ENCODE measurements at regions of chr14 and their contacts with region 1.

Region 1: DNA sequence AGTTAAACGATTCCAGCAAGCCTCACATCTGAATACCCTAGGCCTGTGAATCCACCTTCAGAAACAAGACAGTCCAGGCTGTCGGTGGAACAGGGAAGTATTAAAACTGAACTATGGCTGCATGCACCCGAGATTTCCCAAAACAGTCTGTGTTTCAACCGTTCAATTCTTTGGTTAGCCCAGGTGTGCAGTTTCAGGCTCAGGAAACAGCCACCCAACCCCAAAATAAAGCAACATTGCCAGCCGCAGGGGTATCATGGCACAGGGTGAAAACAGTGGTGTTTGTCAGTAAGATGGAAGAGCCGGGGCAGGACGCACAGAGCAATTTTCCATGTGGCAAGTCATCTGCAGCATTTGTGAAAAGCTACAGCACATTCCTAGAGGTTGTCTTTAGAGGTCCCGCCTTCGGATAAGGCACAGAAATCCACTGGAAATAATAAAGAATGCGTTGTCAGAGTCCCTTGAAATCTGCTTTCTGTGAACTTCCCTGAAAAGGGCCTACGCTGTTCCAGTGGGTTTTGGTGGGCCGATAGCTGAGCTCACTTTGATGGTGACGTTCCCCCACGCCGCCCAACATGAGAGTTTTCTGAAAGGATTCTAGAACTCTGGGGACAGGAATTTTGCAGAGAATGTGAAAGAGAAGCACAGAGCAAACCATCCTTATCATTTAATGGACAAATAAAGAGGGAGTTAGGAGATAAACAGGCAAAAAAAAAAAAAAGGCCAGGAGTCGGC is 84.9 kb downstream of the BCL11B start:
- DNase-seq: peak in 1 of 35 experiments; percentile 40
- ATAC-seq: no peak
- H3K4me3 ChIP-seq: peak overlapping the region in 1 of 2 donors; percentile 2
- H3K4me3 Mint-ChIP-seq: peak overlapping the region; percentile 72 to 89 (median 72)
- H3K27ac ChIP-seq: peak overlapping the region; percentile 76
- H3K27ac Mint-ChIP-seq: peak overlapping the region; percentile 90 to 96
- H3K4me1 ChIP-seq: peaks cover 60 to 99% of the 10 kb centered on the region in 2 experiments
- H3K4me1 Mint-ChIP-seq: peaks cover 94 to 100% (median 95%) of the 10 kb centered on the region in 3 donors
- H3K27me3 ChIP-seq: no peaks in the 10 kb centered on the region
- H3K27me3 Mint-ChIP-seq: no peaks in the 10 kb centered on the region

Region 2: DNA sequence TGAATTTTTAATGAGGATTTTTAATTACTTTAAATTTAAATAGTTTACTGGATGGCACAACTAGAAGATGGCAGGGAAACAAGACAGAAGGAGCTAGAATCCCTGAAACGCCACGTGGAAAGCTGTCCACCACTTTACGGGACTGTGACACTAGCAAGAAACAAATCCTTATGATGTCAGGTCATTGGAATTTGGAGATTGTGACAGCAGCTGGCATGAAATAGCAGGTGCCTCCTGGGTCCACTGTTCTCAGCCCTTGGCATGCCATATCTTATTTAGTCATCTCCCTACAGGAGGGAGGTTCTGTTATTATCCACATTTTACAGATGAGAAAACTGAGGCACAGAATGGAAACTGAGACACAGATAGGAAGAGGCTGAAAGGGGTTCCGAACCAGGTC is 29.0 kb before region 1 on chr14:
- CTCF ChIA-PET with region 1: interaction called in 1 of 2 experiments, 12 read pairs
- POLR2A ChIA-PET with region 1: interaction called, 5 to 6 read pairs
- DNase-seq: no peak
- ATAC-seq: no peak
- H3K4me3 ChIP-seq: no peak overlapping the region
- H3K4me3 Mint-ChIP-seq: no peak overlapping the region
- H3K27ac ChIP-seq: no peak overlapping the region
- H3K27ac Mint-ChIP-seq: no peak overlapping the region
- H3K4me1 ChIP-seq: no peaks in the 10 kb centered on the region
- H3K4me1 Mint-ChIP-seq: peaks cover 10 to 36% (median 17%) of the 10 kb centered on the region in 3 donors
- H3K27me3 ChIP-seq: no peaks in the 10 kb centered on the region
- H3K27me3 Mint-ChIP-seq: no peaks in the 10 kb centered on the region